ENCODE measurements at regions of chr2 and their contacts with region 1.

Region 1: GRCh38 chr2:128178650-128179460 is 87.9 kb downstream of the UGGT1 start:
- DNase-seq: peak; percentile 79 to 88 (median 87)
- H3K4me3 ChIP-seq: no peak overlapping the region
- H3K27ac ChIP-seq: no peak overlapping the region
- H3K4me1 ChIP-seq: peaks cover 0 to 2% (median 2%) of the 10 kb centered on the region in 4 experiments
- H3K27me3 ChIP-seq: no peaks in the 10 kb centered on the region

Region 2: DNA sequence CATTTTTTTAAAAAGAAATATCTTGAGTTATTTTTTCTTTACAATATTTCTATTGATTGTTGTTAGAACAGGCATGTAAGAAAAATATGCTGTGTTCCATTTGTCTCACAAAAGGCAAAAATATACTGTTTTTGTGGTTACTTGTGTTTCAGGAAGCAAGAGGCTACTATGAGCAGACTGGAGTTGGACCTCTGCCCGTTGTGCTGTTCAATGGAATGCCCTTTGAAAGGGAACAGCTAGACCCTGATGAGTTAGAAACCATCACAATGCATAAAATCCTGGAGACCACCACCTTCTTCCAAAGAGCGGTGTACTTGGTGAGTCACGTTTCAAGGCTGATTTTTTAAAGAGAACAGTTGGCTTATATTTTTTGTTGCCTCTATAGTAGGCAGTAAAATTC is 33.2 kb before region 1 on chr2:
- CTCF ChIA-PET with region 1: no interaction called
- POLR2A ChIA-PET with region 1: no interaction called
- DNase-seq: no peak
- H3K4me3 ChIP-seq: no peak overlapping the region
- H3K27ac ChIP-seq: no peak overlapping the region
- H3K4me1 ChIP-seq: no peaks in the 10 kb centered on the region
- H3K27me3 ChIP-seq: no peaks in the 10 kb centered on the region

Region 3: DNA sequence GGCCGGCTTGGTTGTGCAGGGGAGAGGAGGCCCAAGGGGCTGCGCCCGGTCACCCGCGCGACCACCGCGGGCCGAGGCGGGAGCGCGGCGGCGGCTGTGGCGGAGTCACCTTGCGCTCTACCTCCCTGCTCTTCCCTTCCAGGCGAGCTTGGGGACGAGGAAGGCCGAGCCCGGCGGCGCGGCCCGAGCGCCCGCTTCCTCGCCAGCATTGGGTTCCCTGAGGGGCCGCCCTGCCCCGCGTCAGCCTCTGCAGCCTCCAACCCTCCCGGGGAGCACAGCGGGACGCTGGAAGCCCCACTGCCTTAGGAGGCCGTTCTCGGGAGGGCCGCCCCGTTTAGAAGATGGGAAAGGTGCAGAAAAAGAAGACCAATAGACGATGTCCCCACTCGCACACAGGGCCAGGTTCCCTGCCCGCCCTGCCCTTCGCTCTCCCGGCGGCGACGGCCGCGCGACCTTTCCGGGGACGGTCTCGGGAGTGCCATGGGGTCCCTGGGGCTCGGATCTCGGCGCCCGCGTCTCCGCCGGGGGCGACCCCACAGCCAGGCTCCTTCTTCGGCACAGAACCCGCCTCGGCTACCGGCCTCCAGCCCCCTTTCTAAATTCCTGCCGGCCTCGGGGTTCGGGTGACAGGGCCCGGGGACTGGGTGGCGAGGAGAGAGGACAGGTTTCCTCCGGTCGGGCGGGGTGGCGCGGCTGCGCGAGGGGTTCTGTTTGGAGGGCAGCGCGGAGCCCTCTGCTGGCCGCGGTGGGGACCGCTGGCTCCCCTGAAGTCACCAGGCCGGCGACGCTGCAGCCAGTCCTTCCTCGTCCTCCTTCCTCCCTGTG is 54.3 kb after region 1 on chr2:
- CTCF ChIA-PET with region 1: interaction called, 30 read pairs
- POLR2A ChIA-PET with region 1: no interaction called
- DNase-seq: peak; percentile 81 to 88 (median 86)
- H3K4me3 ChIP-seq: peak overlapping the region; percentile 46 to 89 (median 76)
- H3K27ac ChIP-seq: no peak overlapping the region
- H3K4me1 ChIP-seq: peaks cover 0 to 11% (median 10%) of the 10 kb centered on the region in 4 experiments
- H3K27me3 ChIP-seq: peaks cover 0 to 1% (median 0%) of the 10 kb centered on the region in 5 experiments

Measured in common myeloid progenitor, CD34-positive (primary cell).